Naive thymus-derived CD4-positive, alpha-beta T cell (primary cell): ENCODE measurements at regions of chr3 and their contacts with region 1.

Region 1: GRCh38 chr3:148329481-148330235 is 368.0 kb upstream of the AGTR1 start:
- DNase-seq: no peak
- ATAC-seq: no peak
- H3K4me3 ChIP-seq: no peak overlapping the region
- H3K4me3 Mint-ChIP-seq: no peak overlapping the region
- H3K27ac ChIP-seq: no peak overlapping the region
- H3K27ac Mint-ChIP-seq: no peak overlapping the region
- H3K4me1 ChIP-seq: no peaks in the 10 kb centered on the region
- H3K4me1 Mint-ChIP-seq: no peaks in the 10 kb centered on the region
- H3K27me3 ChIP-seq: no peaks in the 10 kb centered on the region
- H3K27me3 Mint-ChIP-seq: no peaks in the 10 kb centered on the region

Region 2: DNA sequence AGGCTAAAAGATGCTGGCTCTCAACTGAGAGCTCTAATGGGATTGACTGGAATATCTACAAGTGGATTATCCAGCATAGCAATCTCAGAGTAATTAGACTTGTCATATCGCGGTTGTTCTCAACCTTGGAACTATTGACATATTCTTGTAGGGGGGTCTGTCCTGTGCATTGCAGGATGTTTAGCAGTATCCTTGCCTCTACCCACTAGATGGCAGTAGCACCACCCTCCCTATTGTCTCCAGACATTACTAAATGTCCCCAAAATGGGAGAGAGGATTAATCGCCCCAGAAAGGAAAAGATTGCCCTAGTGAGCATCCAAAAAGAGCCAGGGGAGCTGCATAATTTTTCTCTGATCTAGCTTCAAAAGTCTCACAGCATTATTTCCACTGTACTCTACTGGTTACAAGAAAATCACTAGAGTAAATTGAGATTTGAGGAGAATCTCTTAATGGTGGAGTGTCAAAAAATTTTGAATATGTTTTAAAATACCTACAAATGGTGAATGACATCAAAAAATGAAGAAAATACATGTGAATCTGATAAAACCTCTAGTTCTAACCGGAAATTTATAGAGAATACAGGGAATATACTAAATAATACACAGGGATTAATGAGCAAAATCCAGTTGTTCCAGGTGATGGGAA is 20.1 kb before region 1 on chr3:
- CTCF ChIA-PET with region 1: no interaction called
- POLR2A ChIA-PET with region 1: no interaction called
- intact Hi-C with region 1: loop called in 1 of 2 experiments (anchors 1 kb)
- DNase-seq: no peak
- ATAC-seq: peak; percentile 36
- H3K4me3 ChIP-seq: no peak overlapping the region
- H3K4me3 Mint-ChIP-seq: no peak overlapping the region
- H3K27ac ChIP-seq: no peak overlapping the region
- H3K27ac Mint-ChIP-seq: no peak overlapping the region
- H3K4me1 ChIP-seq: no peaks in the 10 kb centered on the region
- H3K4me1 Mint-ChIP-seq: no peaks in the 10 kb centered on the region
- H3K27me3 ChIP-seq: no peaks in the 10 kb centered on the region
- H3K27me3 Mint-ChIP-seq: no peaks in the 10 kb centered on the region